SK-N-SH (cell line): ENCODE measurements at regions of chr18 and their contacts with region 1.

Region 1: DNA sequence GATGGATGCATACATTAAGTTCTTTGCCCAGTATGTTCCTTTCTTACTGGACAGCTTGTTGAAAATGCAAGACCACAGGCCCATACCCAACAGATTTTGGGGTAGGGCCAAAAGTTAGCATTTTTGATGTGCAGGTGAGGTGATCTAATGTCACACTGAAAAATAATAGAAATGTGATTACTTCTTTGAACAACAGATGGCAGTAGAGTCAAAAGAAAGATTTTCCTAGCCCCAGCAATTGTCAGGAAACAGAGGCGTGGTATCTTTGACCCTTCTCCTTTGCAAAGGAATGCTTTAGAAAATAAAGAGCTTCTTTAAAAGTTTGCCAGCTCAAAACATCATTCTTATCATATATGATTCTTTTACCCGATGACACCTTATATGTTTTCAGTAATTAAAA is 343.6 kb upstream of the SYT4 start:
- DNase-seq: peak; percentile 39
- H3K4me3 ChIP-seq: no peak overlapping the region
- H3K27ac ChIP-seq: no peak overlapping the region
- H3K4me1 ChIP-seq: peaks cover 0 to 3% of the 10 kb centered on the region in 2 experiments; a peak in 3 of 4 replicates
- H3K27me3 ChIP-seq: no peaks in the 10 kb centered on the region
- CTCF ChIP-seq: peak; percentile 71
- EP300 ChIP-seq: no peak
- RAD21 ChIP-seq: peak; percentile 88

Region 2: GRCh38 chr18:43634994-43635393 is 14.1 kb after region 1 on chr18:
- CTCF ChIA-PET with region 1: interaction called, 21 read pairs
- POLR2A ChIA-PET with region 1: no interaction called
- DNase-seq: no peak
- H3K4me3 ChIP-seq: no peak overlapping the region
- H3K27ac ChIP-seq: no peak overlapping the region
- H3K4me1 ChIP-seq: no peaks in the 10 kb centered on the region; a peak in 1 of 4 replicates
- H3K27me3 ChIP-seq: no peaks in the 10 kb centered on the region
- CTCF ChIP-seq: no peak
- EP300 ChIP-seq: peak in 1 of 2 experiments; percentile 29; a peak in 1 of 4 replicates
- RAD21 ChIP-seq: no peak; the same call in 1 of the 2 replicates

Region 3: DNA sequence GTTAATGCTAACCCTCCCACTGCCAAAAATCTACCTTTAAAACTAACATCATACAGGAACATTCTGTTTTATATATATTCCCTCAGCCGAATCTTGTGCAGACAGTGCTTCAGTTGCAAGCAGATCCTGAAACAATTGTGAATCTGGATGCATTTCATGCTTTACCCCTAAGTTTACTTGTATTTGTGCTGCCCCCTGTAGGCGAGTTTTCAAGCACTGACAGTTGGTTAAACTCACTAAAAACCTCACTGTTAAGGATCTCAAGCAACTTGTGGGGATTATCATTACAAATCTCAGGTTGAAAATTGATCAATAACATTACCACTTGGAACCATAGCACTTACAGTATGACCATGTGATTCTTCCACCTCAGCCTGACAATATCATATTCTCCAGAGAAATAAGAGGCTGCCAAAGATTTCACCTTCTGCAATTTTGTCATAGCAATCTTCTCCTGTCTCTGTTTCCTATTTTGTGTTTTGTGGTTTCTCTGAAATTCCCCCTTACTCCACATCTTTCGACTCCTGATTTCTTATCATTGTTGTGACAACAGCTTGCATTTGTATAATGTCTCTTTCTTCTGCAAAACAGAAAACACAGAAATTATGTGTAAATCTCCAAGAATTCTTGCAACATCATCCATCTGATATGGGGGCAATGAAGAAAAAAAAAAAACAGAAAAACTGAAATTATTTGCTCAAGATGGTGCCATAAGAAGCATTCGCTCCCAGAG is 705.1 kb after region 1 on chr18:
- CTCF ChIA-PET with region 1: interaction called, 18 read pairs
- POLR2A ChIA-PET with region 1: no interaction called
- DNase-seq: peak; percentile 42
- H3K4me3 ChIP-seq: no peak overlapping the region; a peak in 1 of 4 replicates
- H3K27ac ChIP-seq: no peak overlapping the region
- H3K4me1 ChIP-seq: peaks cover 0 to 6% of the 10 kb centered on the region in 2 experiments; a peak in 2 of 4 replicates
- H3K27me3 ChIP-seq: no peaks in the 10 kb centered on the region
- CTCF ChIP-seq: peak; percentile 78
- EP300 ChIP-seq: no peak
- RAD21 ChIP-seq: peak; percentile 78